CD4-positive, alpha-beta T cell (primary cell): ENCODE measurements at regions of chr6 and their contacts with region 1.

Region 1: GRCh38 chr6:121849477-121849876 is 414.0 kb downstream of the GJA1 start:
- DNase-seq: peak in 4 of 14 experiments; percentile 6 to 42 (median 32)
- ATAC-seq: no peak
- H3K4me3 ChIP-seq: no peak overlapping the region
- H3K4me3 Mint-ChIP-seq: no peak overlapping the region
- H3K27ac ChIP-seq: no peak overlapping the region
- H3K27ac Mint-ChIP-seq: no peak overlapping the region
- H3K4me1 ChIP-seq: no peaks in the 10 kb centered on the region
- H3K4me1 Mint-ChIP-seq: peaks cover 27% of the 10 kb centered on the region
- H3K27me3 ChIP-seq: no peaks in the 10 kb centered on the region
- H3K27me3 Mint-ChIP-seq: no peaks in the 10 kb centered on the region
- CTCF ChIP-seq: peak; percentile 24

Region 2: DNA sequence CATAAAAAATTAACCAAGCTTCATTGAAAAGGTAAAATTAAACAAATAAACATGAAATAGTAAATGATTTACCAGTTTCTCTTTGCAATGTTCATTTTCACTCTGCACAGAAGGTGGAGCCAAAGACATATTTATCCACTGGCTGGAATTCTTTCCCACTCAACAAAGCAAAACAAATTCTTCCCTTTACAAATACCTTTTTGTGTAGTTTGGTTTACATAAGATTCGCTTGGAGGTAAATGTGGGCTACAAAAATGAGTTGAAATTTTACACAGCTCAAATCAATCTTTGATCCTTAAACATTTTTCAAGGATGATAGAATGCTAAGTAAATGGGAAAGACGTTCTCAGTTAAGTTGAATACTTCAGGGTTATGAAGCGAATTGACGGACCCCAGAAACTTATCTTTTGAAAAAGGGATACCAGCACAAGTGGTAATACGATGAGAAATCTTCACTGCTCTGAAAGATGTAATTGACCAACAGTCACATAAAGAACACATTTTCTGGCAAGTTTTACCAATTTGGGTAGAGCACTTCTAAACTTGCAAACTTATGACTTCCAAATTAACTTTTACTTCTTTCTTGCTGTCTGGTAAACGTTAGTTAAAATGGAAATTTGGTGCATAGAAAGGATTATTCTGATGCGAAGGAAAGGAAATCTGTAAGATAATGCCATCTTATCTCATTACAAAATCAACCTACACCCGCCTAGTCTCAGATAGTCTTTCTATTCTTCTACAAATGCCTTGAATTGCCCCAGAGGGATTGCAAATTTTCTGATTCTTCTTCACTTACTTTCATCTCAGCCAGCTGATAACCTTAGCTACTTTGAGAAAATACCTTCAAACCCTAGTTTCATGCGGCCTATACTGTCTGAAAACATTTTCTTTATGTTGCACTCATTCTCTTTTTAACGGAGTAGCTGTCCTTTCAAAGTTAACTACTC is 418.7 kb before region 1 on chr6:
- CTCF ChIA-PET with region 1: no interaction called
- POLR2A ChIA-PET with region 1: no interaction called
- intact Hi-C with region 1: loop called in 1 of 2 experiments (anchors 5 kb)
- DNase-seq: no peak
- ATAC-seq: no peak
- H3K4me3 ChIP-seq: no peak overlapping the region
- H3K4me3 Mint-ChIP-seq: no peak overlapping the region
- H3K27ac ChIP-seq: no peak overlapping the region
- H3K27ac Mint-ChIP-seq: no peak overlapping the region
- H3K4me1 ChIP-seq: no peaks in the 10 kb centered on the region
- H3K4me1 Mint-ChIP-seq: peaks cover 9% of the 10 kb centered on the region
- H3K27me3 ChIP-seq: no peaks in the 10 kb centered on the region
- H3K27me3 Mint-ChIP-seq: peaks cover 4% of the 10 kb centered on the region
- CTCF ChIP-seq: peak; percentile 45

Region 3: GRCh38 chr6:122081922-122082321 is 232.4 kb after region 1 on chr6:
- CTCF ChIA-PET with region 1: no interaction called
- POLR2A ChIA-PET with region 1: no interaction called
- intact Hi-C with region 1: no loop called
- DNase-seq: no peak
- ATAC-seq: no peak
- H3K4me3 ChIP-seq: no peak overlapping the region
- H3K4me3 Mint-ChIP-seq: no peak overlapping the region
- H3K27ac ChIP-seq: no peak overlapping the region
- H3K27ac Mint-ChIP-seq: no peak overlapping the region
- H3K4me1 ChIP-seq: no peaks in the 10 kb centered on the region
- H3K4me1 Mint-ChIP-seq: no peaks in the 10 kb centered on the region
- H3K27me3 ChIP-seq: no peaks in the 10 kb centered on the region
- H3K27me3 Mint-ChIP-seq: peaks cover 7% of the 10 kb centered on the region
- CTCF ChIP-seq: no peak